ENCODE measurements at regions of chr16 and their contacts with region 1.

Region 1: DNA sequence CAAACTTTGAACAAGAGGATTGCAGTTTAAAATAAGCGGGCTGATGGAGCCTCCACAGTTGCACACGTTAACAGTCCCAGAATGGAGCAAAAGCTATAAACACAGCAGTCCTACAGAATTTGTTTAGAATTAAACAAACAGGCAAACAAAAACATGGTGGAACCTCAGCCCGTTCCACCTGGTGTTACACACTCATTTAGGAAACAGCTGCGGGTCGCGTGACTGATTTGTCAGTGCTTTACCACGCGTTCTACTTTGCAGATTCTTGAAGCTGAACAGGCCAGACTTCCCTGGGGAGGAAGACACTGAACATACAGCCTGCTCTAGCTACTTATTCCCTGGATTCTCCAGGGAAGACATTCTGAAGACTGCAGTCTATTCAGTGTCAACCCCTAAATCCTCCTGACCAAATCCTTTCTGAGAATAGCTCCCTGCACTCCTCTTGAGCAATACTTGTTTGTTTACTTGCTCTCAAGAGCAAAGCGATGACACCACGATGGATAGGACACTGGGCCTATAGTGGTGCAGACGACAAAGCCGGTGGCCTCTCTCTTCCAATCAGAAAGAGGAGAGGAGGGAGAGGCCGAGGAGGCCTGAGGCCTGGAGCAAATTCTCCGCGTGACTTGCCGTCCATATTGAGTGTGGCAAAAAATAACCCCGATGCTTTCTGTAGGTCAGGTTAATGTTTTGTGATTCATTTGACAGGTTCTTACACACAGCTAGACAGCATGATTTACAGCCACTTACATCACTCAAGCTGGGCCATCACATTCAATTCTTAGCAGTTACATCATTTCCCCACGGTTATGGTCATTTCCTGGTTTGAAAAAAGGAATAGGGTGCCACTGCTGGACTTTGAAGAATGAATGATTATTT is 4.0 kb upstream of the MAP1LC3B start:
- DNase-seq: peak; percentile 76 to 97 (median 86)
- ATAC-seq: peak; percentile 65
- H3K4me3 ChIP-seq: peak overlapping the region; percentile 4 to 13
- H3K4me3 Mint-ChIP-seq: peak overlapping the region; percentile 30
- H3K27ac ChIP-seq: peak overlapping the region; percentile 53 to 89
- H3K27ac Mint-ChIP-seq: peak overlapping the region; percentile 97
- H3K4me1 ChIP-seq: peaks cover 22% of the 10 kb centered on the region
- H3K4me1 Mint-ChIP-seq: peaks cover 38% of the 10 kb centered on the region
- H3K27me3 ChIP-seq: no peaks in the 10 kb centered on the region
- H3K27me3 Mint-ChIP-seq: no peaks in the 10 kb centered on the region
- CTCF ChIP-seq: no peak

Region 2: DNA sequence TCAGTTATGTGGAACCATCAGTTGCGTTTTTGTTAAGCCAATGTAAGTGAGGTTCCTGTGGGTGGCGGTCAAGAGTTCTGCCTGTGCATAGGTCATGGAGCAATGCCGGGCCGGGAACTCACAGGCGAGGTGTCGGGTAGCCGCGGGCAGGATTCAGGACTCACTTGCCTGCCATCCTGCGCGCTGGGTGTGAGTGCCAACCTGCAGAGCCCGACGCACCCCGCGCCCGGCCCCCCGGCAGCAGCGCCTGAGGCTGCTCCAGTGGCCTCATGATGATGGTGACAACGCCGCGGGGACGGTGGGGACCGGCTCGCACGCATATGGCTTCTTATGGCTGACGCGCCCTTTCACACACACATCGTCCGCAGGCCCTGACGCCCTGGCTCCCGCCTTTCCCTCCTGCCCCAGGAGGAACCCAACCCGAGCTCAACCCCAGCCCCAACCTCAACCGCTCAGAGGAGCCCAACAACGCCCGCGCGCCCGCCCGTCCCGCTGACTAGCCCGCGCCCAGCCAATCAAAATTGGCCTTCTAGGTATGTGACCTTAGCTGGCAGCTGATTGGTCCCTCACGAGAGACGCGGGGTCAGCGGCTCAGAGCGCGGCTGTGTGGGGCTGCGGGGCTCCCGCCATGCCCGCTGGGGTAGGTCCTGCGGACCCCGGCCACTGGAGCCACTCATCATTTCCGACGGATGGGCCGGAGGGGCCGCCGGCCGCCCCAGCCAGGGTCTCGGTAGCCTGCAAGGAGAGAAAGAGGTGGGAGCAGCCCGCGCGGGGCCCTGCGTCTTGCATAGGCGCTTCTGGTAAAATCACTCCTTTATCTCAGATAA is 71.0 kb before region 1 on chr16 and contains the start of gene C16orf95:
- CTCF ChIA-PET with region 1: interaction called, 32 read pairs
- POLR2A ChIA-PET with region 1: interaction called, 15 read pairs
- intact Hi-C with region 1: loop called (anchors 1 kb)
- DNase-seq: peak; percentile 93 to 99 (median 97)
- ATAC-seq: peak; percentile 89
- H3K4me3 ChIP-seq: peak within 1 kb of the TSS; percentile 92 to 99
- H3K4me3 Mint-ChIP-seq: peak within 1 kb of the TSS; percentile 94
- H3K27ac ChIP-seq: peak within 1 kb of the TSS; percentile 76 to 81
- H3K27ac Mint-ChIP-seq: peak within 1 kb of the TSS; percentile 95
- H3K4me1 ChIP-seq: peaks cover 8% of the 10 kb centered on the region
- H3K4me1 Mint-ChIP-seq: peaks cover 14% of the 10 kb centered on the region
- H3K27me3 ChIP-seq: no peaks in the 10 kb centered on the region
- H3K27me3 Mint-ChIP-seq: no peaks in the 10 kb centered on the region
- CTCF ChIP-seq: peak; percentile 42
- total RNA-seq, gene C16orf95: 0.76 to 1.2 TPM

Region 3: GRCh38 chr16:87404764-87405625 is 16.8 kb after region 1 on chr16:
- CTCF ChIA-PET with region 1: interaction called, 18 read pairs
- POLR2A ChIA-PET with region 1: interaction called, 3 read pairs
- intact Hi-C with region 1: no loop called
- DNase-seq: no peak
- ATAC-seq: no peak
- H3K4me3 ChIP-seq: no peak overlapping the region
- H3K4me3 Mint-ChIP-seq: no peak overlapping the region
- H3K27ac ChIP-seq: no peak overlapping the region
- H3K27ac Mint-ChIP-seq: no peak overlapping the region
- H3K4me1 ChIP-seq: no peaks in the 10 kb centered on the region
- H3K4me1 Mint-ChIP-seq: no peaks in the 10 kb centered on the region
- H3K27me3 ChIP-seq: no peaks in the 10 kb centered on the region
- H3K27me3 Mint-ChIP-seq: no peaks in the 10 kb centered on the region
- CTCF ChIP-seq: no peak

Region 4: GRCh38 chr16:87860553-87861299 is 472.5 kb after region 1 on chr16:
- CTCF ChIA-PET with region 1: no interaction called
- POLR2A ChIA-PET with region 1: no interaction called
- intact Hi-C with region 1: loop called in 1 of 2 experiments (anchors 5 kb)
- DNase-seq: peak in 2 of 9 experiments; percentile 14 to 25
- ATAC-seq: peak; percentile 12
- H3K4me3 ChIP-seq: no peak overlapping the region
- H3K4me3 Mint-ChIP-seq: peak overlapping the region; percentile 22
- H3K27ac ChIP-seq: no peak overlapping the region
- H3K27ac Mint-ChIP-seq: peak overlapping the region; percentile 18
- H3K4me1 ChIP-seq: peaks cover 21% of the 10 kb centered on the region
- H3K4me1 Mint-ChIP-seq: peaks cover 35% of the 10 kb centered on the region
- H3K27me3 ChIP-seq: no peaks in the 10 kb centered on the region
- H3K27me3 Mint-ChIP-seq: no peaks in the 10 kb centered on the region
- CTCF ChIP-seq: no peak